PC-9 (cell line): ENCODE measurements at regions of chr17 and their contacts with region 1.

Region 1: GRCh38 chr17:76365256-76365903 is 11.7 kb upstream of the PRPSAP1 start:
- DNase-seq: no peak
- H3K4me3 ChIP-seq: no peak overlapping the region
- H3K27ac ChIP-seq: no peak overlapping the region
- H3K4me1 ChIP-seq: no peaks in the 10 kb centered on the region
- H3K27me3 ChIP-seq: no peaks in the 10 kb centered on the region
- CTCF ChIP-seq: peak; percentile 65

Region 2: GRCh38 chr17:76039121-76039520 is 326.3 kb before region 1 on chr17:
- CTCF ChIA-PET with region 1: no interaction called
- POLR2A ChIA-PET with region 1: no interaction called
- intact Hi-C with region 1: no loop called
- DNase-seq: no peak
- H3K4me3 ChIP-seq: no peak overlapping the region
- H3K27ac ChIP-seq: no peak overlapping the region
- H3K4me1 ChIP-seq: no peaks in the 10 kb centered on the region
- H3K27me3 ChIP-seq: no peaks in the 10 kb centered on the region
- CTCF ChIP-seq: no peak

Region 3: DNA sequence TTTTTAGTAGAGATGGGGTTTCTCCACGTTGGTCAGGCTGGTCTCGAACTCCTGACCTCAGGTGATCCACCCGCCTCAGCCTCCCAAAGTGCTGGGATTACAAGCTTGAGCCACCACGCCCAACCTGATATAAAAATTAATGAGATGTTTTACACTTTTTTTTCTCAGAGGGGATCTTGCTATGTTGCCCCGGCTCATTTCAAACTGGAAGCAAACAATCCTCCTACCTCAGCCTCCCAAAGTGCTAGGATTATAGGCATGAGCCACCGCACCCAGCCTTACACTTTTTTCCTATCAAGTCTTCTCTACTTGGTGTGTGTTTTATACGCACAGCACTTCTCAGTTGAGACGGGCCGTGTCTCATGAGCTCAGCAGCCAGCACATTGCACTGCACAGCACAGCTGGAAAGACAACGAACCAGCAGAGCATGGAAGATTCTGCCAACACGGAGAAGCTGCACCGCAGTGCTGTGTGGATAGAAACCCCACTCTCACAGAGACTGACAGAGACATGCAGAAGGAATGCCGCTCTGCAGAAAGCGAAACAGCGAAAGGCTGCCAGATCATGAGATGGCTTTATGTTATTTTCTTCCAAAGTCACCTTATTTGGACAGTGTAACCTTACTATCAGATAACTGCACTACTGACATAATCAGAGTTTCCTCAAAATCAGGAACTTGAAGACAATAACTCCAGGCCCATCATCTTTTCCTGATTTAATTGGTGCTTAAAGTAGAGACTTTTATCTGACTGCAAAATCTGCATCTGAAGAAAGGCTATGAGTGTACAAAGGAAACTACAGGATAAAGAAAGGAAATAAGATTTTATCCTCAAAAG is 50.8 kb before region 1 on chr17:
- CTCF ChIA-PET with region 1: no interaction called
- POLR2A ChIA-PET with region 1: interaction called, 11 read pairs
- intact Hi-C with region 1: no loop called
- DNase-seq: no peak
- H3K4me3 ChIP-seq: no peak overlapping the region
- H3K27ac ChIP-seq: no peak overlapping the region
- H3K4me1 ChIP-seq: no peaks in the 10 kb centered on the region
- H3K27me3 ChIP-seq: no peaks in the 10 kb centered on the region
- CTCF ChIP-seq: no peak

Region 4: DNA sequence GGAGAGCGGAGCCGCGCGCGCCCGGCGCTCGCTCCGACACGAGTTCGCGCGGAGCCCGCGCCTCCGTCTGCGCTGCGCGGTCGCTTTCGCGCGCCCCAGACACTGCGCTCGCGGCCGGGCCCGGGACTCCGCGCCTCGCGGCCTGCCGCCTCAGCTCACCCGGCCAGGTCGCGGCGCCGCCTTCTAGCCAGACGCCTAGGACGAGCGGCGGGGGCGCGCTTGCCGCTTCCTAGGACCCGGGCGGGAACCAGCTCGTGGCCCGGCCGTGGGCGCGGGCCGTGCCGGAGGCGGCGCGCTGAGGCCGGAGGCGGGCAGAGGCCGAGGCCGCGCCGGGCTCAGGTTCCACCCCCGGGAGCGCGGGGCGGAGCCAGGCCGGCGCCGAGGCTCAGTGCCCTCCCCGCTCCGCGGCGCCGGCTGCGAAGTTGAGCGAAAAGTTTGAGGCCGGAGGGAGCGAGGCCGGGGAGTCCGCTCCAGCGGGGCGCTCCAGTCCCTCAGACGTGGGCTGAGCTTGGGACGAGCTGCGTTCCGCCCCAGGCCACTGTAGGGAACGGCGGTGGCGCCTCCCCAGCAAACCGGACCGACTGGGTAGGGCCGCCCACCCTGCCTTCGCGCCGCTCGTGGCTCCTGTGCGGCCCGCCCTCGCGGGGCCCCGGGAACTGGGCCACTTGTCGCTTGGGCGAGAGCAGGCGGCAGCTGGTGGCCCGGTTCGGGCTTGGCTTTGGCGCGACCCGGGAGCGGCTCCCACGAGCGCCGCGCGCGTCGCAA is 19.0 kb after region 1 on chr17 and contains the start of gene SPHK1:
- CTCF ChIA-PET with region 1: interaction called, 18 read pairs
- POLR2A ChIA-PET with region 1: interaction called, 3 read pairs
- intact Hi-C with region 1: no loop called
- DNase-seq: peak; percentile 37 to 78
- H3K4me3 ChIP-seq: peak within 1 kb of the TSS; percentile 68
- H3K27ac ChIP-seq: no peak within 1 kb of the TSS
- H3K4me1 ChIP-seq: peaks cover 4% of the 10 kb centered on the region; the same call in 1 of the 2 replicates
- H3K27me3 ChIP-seq: no peaks in the 10 kb centered on the region
- CTCF ChIP-seq: no peak
- total RNA-seq, gene SPHK1: 5.5 and 9.3 TPM in 2 replicates

Region 5: DNA sequence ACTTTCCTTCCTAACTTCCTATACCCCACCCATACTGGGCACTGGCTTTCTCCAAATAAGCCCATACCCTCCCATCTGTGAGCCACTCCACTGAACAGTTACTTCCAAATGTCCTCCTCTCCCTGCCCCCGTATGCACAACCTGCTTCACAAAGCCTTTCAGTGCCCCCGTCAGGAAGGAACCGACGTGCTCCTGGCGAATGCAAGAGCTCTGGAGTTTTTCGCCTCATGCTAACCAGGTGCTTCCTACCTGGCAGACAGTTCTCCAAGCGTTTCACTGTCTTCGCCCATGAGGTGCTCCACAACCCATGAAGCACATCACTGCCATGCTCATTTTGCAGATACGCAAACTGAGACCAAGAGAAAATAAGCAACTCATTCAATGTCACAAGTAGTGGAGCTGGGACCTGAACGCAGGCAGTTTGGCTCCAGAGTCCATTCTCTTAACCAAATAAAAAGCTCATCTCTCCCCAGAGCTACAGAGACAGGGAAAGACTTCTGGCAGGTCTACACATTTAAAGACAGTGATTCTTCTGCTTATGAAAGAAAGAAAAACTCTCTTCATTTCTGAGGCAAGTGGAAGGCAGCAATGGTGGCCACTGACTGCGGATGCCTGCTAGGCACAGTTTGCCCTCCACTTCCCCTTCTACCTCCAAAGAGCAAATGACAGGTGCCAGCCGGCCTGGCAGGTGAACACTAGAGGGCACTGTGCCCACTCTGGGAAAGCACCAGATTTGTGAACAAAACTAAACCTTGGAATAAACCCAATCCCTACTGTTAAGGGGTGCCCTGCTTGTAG is 42.9 kb after region 1 on chr17:
- CTCF ChIA-PET with region 1: interaction called, 13 read pairs
- POLR2A ChIA-PET with region 1: no interaction called
- intact Hi-C with region 1: no loop called
- DNase-seq: peak in 1 of 2 experiments; percentile 67
- H3K4me3 ChIP-seq: no peak overlapping the region
- H3K27ac ChIP-seq: no peak overlapping the region
- H3K4me1 ChIP-seq: no peaks in the 10 kb centered on the region
- H3K27me3 ChIP-seq: no peaks in the 10 kb centered on the region
- CTCF ChIP-seq: peak; percentile 79

Region 6: DNA sequence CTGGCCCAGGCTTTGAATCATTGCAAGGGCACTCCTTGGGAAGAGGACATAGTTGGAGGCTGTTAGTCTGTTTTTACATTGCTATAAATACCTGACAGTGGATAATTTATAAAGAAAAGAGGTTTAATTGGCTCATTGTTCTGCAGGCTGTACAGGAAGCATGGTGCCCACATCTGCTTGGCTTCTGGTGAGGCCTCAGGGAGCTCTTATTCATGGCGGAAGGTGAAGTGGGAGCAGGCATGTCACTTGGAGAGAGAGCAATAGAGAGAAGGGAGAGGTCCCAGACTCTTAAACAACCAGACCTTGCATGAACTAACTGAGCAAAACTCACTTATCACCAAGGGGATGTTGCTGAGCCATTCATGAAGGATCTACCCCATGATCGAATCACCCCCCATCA is 237.5 kb after region 1 on chr17:
- CTCF ChIA-PET with region 1: no interaction called
- POLR2A ChIA-PET with region 1: no interaction called
- intact Hi-C with region 1: no loop called
- DNase-seq: no peak
- H3K4me3 ChIP-seq: no peak overlapping the region
- H3K27ac ChIP-seq: peak overlapping the region; percentile 91
- H3K4me1 ChIP-seq: peaks cover 32% of the 10 kb centered on the region
- H3K27me3 ChIP-seq: no peaks in the 10 kb centered on the region
- CTCF ChIP-seq: no peak

Region 7: DNA sequence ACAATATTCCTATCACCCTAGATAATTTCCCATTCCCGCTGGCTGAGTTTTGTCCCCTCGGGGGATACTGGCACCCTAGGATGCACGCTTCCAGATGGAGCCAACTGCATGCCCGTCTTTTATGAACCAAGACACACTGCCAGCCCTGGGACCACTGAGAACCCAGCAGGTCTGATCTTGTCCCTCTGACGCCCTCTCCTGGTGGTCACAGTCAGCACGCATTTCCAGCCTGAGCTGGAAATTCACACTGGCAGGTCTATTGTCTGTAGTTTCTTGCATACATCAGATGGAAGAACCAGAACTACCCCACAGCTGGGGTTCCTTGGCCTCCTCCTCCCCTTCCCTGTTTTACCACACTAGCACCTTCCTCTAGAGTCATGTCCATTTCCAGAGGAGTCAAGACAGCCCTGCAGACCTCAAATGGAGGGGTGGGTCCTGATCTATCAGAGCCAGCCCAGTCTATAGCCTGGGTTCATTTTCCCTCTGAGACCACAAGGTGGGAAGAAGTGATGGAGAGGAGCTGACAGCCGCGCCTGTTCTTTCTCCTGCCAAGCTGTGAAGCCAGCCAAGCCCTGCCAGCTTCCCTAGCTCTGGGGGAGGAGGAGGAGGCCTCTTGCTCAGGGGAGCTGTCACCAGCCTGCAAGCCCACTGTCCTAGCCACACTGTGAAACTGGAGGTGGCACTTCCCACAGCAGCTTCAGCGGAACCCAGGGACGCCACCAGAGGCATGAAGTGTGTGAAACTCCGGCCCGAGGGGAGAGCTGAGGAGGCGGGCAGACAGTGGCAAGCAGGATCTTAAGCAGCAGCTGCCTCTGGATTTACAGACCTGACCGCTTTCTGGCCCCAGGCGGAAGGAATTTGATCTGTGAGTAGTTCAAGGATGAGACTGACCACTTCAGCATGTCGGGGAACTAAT is 316.1 kb after region 1 on chr17:
- CTCF ChIA-PET with region 1: interaction called, 24 read pairs
- POLR2A ChIA-PET with region 1: no interaction called
- intact Hi-C with region 1: no loop called
- DNase-seq: peak in 1 of 2 experiments; percentile 70
- H3K4me3 ChIP-seq: no peak overlapping the region
- H3K27ac ChIP-seq: no peak overlapping the region
- H3K4me1 ChIP-seq: no peaks in the 10 kb centered on the region
- H3K27me3 ChIP-seq: no peaks in the 10 kb centered on the region
- CTCF ChIP-seq: peak; percentile 77